CD8-positive, alpha-beta T cell (primary cell): ENCODE measurements at regions of chr9 and their contacts with region 1.

Region 1: DNA sequence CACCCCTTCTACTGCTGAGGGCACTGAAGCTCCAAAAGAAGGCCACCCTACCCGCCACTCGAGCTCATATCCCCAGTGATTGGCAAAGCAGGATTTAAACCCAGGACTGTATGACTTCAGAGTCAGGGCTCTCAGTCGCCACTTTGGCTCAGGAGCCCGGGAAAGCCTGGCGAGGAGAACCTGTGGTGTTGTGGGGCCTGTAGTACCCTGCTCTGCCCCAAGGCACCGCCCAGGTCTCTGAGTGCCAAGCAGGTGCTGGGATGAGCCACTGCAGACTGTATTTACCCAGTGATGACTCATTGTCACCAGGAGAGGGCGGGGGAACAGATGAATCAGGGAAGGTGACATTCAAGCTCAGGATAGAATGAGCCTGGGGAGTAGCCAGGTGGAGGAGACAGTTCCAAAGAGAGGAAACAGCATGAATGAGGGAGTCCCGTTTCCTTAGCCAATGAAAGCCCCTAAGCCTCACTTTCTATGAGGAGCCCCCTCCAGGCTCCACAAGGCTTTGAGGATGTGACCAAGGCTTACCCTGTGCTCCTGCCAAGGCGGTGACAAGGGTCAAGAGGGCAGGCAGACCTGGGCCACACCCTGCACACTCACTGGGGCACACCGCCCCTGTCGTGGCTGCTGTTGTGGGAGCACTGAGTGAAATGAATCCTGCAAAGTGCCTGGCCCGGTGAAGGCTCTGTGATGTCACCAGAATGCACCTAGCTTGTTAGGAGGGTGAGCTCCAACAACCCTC is 17.8 kb upstream of the DPM2 start:
- DNase-seq: peak; percentile 41 to 89 (median 82)
- ATAC-seq: peak; percentile 87
- H3K4me3 ChIP-seq: peak overlapping the region; percentile 4 to 21
- H3K4me3 Mint-ChIP-seq: peak overlapping the region; percentile 68
- H3K27ac ChIP-seq: peak overlapping the region; percentile 3 to 17
- H3K27ac Mint-ChIP-seq: peak overlapping the region; percentile 91
- H3K4me1 ChIP-seq: peaks cover 97% of the 10 kb centered on the region
- H3K4me1 Mint-ChIP-seq: peaks cover 85% of the 10 kb centered on the region
- H3K27me3 ChIP-seq: no peaks in the 10 kb centered on the region
- H3K27me3 Mint-ChIP-seq: no peaks in the 10 kb centered on the region
- CTCF ChIP-seq: peak; percentile 77

Region 2: GRCh38 chr9:127970401-127971313 is 15.2 kb after region 1 on chr9:
- CTCF ChIA-PET with region 1: interaction called, 573 read pairs
- POLR2A ChIA-PET with region 1: interaction called, 220 read pairs
- intact Hi-C with region 1: loop called (anchors 1 kb)
- DNase-seq: peak; percentile 38 to 86 (median 75)
- ATAC-seq: peak; percentile 60
- H3K4me3 ChIP-seq: peak overlapping the region; percentile 32 to 73
- H3K4me3 Mint-ChIP-seq: peak overlapping the region; percentile 88
- H3K27ac ChIP-seq: peak overlapping the region; percentile 67 to 76
- H3K27ac Mint-ChIP-seq: peak overlapping the region; percentile 99
- H3K4me1 ChIP-seq: peaks cover 96% of the 10 kb centered on the region
- H3K4me1 Mint-ChIP-seq: peaks cover 98% of the 10 kb centered on the region
- H3K27me3 ChIP-seq: no peaks in the 10 kb centered on the region
- H3K27me3 Mint-ChIP-seq: no peaks in the 10 kb centered on the region
- CTCF ChIP-seq: no peak

Region 3: DNA sequence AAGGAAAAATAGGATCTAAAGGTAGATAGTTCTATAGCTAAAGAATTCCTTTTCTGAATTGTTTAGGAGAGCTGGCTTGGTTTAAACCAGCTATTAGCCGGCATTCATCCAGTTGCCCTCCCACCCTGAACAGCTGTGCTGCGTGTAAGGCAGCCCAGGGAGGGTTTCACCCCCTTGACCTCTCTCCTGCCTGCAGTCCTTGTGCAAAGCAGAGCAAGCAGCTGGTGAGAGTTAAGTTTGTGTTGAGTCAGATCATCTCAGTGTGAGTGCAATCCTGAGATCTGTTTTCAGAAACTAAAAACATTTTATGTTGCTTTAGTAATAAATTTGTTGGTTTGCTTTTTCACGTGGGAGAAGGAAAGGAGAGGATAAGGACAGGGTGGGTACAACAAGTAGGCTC is 125.6 kb after region 1 on chr9:
- CTCF ChIA-PET with region 1: interaction called, 11 read pairs
- POLR2A ChIA-PET with region 1: no interaction called
- intact Hi-C with region 1: no loop called
- DNase-seq: no peak
- ATAC-seq: no peak
- H3K4me3 ChIP-seq: no peak overlapping the region
- H3K4me3 Mint-ChIP-seq: no peak overlapping the region
- H3K27ac ChIP-seq: peak overlapping the region in 1 of 2 experiments; percentile 19
- H3K27ac Mint-ChIP-seq: peak overlapping the region; percentile 46
- H3K4me1 ChIP-seq: peaks cover 19% of the 10 kb centered on the region
- H3K4me1 Mint-ChIP-seq: peaks cover 49% of the 10 kb centered on the region
- H3K27me3 ChIP-seq: no peaks in the 10 kb centered on the region
- H3K27me3 Mint-ChIP-seq: no peaks in the 10 kb centered on the region
- CTCF ChIP-seq: no peak

Region 4: DNA sequence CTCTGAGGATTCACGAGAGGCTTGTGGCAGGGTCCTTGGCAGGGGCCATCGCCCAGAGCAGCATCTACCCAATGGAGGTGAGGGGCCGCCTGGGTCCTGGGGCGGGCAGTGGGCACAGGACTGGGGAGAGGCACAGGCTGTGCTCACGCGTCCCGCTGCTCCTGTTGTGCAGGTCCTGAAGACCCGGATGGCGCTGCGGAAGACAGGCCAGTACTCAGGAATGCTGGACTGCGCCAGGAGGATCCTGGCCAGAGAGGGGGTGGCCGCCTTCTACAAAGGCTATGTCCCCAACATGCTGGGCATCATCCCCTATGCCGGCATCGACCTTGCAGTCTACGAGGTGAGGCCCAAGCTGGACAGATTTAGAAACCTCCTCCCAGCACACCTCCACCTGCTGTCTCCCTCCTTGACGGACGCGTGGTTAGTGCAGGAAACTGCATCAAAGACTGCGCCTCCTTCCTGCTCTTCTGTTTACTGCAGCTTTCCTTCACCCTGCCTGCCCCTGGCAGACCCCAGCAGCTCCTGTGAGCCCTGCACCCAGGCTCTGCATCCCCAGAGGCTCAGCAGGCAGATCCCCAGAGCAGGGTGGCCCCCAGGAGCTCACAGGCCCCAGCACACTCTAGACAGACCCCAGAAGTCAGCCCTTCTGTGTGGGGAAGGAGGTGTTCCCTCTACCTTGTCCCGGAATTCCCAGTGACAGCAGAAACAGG is 150.9 kb after region 1 on chr9:
- CTCF ChIA-PET with region 1: no interaction called
- POLR2A ChIA-PET with region 1: no interaction called
- intact Hi-C with region 1: no loop called
- DNase-seq: peak in 1 of 9 experiments; percentile 57
- ATAC-seq: peak; percentile 62
- H3K4me3 ChIP-seq: no peak overlapping the region
- H3K4me3 Mint-ChIP-seq: no peak overlapping the region
- H3K27ac ChIP-seq: peak overlapping the region in 1 of 2 experiments; percentile 19
- H3K27ac Mint-ChIP-seq: no peak overlapping the region
- H3K4me1 ChIP-seq: peaks cover 41% of the 10 kb centered on the region
- H3K4me1 Mint-ChIP-seq: peaks cover 36% of the 10 kb centered on the region
- H3K27me3 ChIP-seq: no peaks in the 10 kb centered on the region
- H3K27me3 Mint-ChIP-seq: no peaks in the 10 kb centered on the region
- CTCF ChIP-seq: peak; percentile 31

Region 5: DNA sequence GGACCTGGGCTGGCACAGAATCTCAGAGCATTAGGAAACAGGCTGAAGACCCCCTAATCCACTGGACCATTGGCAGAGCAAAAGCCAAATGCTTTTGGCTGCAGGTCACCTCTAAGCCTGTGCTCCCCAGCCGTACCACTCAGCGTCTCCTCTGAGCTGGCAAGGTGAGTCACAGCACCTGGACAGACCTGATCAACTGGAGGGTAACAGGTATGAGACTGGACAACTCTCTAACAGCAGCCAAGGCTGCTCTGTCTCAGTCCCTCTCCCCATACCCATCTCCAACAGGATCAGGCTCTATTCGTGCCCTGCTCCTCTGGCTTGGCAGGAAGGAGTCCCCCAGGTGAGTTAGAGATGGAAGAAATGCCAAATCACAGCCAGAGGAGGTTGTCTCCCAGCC is 315.6 kb after region 1 on chr9:
- CTCF ChIA-PET with region 1: no interaction called
- POLR2A ChIA-PET with region 1: no interaction called
- intact Hi-C with region 1: no loop called
- DNase-seq: no peak
- ATAC-seq: no peak
- H3K4me3 ChIP-seq: no peak overlapping the region
- H3K4me3 Mint-ChIP-seq: no peak overlapping the region
- H3K27ac ChIP-seq: no peak overlapping the region
- H3K27ac Mint-ChIP-seq: no peak overlapping the region
- H3K4me1 ChIP-seq: peaks cover 13% of the 10 kb centered on the region
- H3K4me1 Mint-ChIP-seq: peaks cover 16% of the 10 kb centered on the region
- H3K27me3 ChIP-seq: no peaks in the 10 kb centered on the region
- H3K27me3 Mint-ChIP-seq: no peaks in the 10 kb centered on the region
- CTCF ChIP-seq: no peak